ENCODE measurements at regions of chr22 and their contacts with region 1.

Region 1: DNA sequence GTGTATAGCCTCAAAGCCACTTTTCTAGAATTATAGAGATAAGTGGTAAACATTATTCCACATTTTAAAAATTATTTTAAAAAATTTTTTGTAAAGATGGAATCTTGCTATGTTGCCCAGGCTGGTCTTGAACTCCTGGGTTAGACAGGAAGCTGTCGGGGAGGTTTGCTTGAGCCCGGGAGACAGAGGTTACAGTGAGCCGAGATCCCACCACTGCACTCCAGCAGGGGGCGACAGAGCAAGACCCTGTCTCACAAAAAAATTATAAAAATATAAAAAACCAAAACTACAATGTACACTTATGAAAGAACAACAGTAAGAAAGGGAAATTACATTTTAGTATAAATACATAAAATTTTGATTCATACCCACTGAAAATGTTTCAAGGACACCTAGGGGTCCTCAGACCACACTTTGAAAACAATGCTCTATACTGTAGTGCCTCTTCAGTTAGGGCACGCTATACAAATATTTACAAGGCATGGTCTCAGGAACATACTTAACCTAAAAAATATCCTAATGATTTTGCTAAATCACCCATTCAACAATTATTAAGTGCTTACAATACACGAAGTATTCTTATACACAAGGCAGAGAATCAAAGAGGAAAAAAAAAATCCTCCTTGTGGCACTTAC is 111.2 kb downstream of the MRTFA start:
- DNase-seq: peak in 1 of 4 donors; percentile 47
- ATAC-seq: peak; percentile 77
- H3K4me3 ChIP-seq: no peak overlapping the region
- H3K27ac ChIP-seq: no peak overlapping the region
- H3K4me1 ChIP-seq: peaks cover 0 to 14% of the 10 kb centered on the region in 2 donors
- H3K27me3 ChIP-seq: no peaks in the 10 kb centered on the region
- CTCF ChIP-seq: peak; percentile 64 to 81

Region 2: DNA sequence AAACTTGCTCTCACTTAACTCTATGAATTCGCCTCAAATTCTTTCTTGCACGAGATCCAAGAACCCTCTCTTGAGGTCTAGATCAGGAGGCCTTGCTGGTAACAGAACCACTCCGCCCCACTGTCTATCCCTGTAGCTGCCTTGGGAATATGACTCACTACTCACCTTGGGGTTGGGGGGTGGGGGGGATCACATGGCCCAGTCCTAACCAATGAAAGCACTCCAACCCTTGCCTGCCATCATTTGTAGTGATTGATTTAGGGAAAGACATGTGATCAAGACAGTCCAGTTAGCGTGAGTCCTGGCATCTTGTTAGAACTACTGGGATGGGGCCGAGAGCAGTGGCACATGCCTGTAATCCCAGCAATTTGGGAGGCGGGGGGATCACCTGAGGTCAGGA is 115.9 kb after region 1 on chr22:
- intact Hi-C with region 1: loop called in 1 of 2 experiments (anchors 10 kb)
- DNase-seq: no peak
- ATAC-seq: no peak
- H3K4me3 ChIP-seq: no peak overlapping the region
- H3K27ac ChIP-seq: no peak overlapping the region
- H3K4me1 ChIP-seq: peaks cover 5 to 23% of the 10 kb centered on the region in 2 donors
- H3K27me3 ChIP-seq: no peaks in the 10 kb centered on the region
- CTCF ChIP-seq: no peak

Region 3: DNA sequence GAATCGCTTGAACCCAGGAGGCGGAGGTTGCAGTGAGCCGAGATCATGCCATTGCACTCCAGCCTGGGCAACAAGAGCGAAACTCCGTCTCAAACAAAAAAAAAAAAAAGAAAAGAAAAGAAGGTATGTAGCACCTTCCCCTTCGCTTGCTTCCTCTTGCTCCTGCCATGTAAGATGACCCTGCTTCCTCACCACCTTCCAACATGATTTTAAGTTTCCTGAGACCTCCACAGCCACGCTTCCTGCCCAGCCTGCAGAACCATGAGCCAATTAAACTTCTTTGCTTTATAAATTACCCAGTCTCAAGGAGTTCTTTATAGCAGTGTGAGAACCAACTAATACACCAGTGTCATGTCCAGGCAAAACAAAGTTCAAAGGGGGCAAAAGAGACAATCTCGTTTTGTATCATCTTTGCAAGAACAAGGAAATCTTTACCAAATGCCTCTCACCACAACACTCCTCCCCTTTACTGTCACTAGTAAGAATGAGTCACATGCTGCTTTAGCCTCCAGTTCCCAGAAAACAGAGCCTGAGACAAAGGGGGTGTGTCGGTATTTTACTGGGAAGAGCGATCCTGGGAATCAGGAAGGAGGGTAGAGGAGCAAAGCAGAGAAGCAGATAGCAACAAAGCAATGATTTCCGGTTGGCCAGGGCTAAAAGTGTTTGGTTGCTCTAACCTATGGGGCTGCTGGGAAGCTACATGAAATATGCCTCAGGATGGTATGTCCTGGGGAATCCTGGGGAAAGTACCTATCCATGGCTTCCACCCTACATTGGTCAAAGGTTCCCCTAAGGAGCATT is 143.4 kb after region 1 on chr22:
- intact Hi-C with region 1: no loop called
- DNase-seq: no peak
- ATAC-seq: peak; percentile 65
- H3K4me3 ChIP-seq: no peak overlapping the region
- H3K27ac ChIP-seq: no peak overlapping the region
- H3K4me1 ChIP-seq: peaks cover 0 to 6% of the 10 kb centered on the region in 2 donors
- H3K27me3 ChIP-seq: no peaks in the 10 kb centered on the region
- CTCF ChIP-seq: no peak